ENCODE measurements at regions of chr1 and their contacts with region 1.

Region 1: GRCh38 chr1:55375617-55376258 is 160.6 kb upstream of the USP24 start:
- DNase-seq: peak in 5 of 10 donors; percentile 40 to 49 (median 43)
- H3K4me3 ChIP-seq: no peak overlapping the region
- H3K27ac ChIP-seq: peak overlapping the region in 18 of 59 donors; percentile 5 to 98 (median 92)
- H3K27me3 ChIP-seq: no peaks in the 10 kb centered on the region
- CTCF ChIP-seq: peak; percentile 84 to 97 (median 92)

Region 2: GRCh38 chr1:55284852-55285251 is 90.9 kb before region 1 on chr1:
- intact Hi-C with region 1: loop called (anchors 2 to 5 kb)
- DNase-seq: peak in 2 of 10 donors; percentile 23 to 30
- H3K4me3 ChIP-seq: peak overlapping the region in 1 of 59 donors; percentile 7
- H3K27ac ChIP-seq: peak overlapping the region in 1 of 59 donors; percentile 53
- H3K27me3 ChIP-seq: peaks cover 0 to 10% (median 0%) of the 10 kb centered on the region in 45 donors
- CTCF ChIP-seq: peak in 54 of 56 donors; percentile 48 to 91 (median 71)

Region 3: DNA sequence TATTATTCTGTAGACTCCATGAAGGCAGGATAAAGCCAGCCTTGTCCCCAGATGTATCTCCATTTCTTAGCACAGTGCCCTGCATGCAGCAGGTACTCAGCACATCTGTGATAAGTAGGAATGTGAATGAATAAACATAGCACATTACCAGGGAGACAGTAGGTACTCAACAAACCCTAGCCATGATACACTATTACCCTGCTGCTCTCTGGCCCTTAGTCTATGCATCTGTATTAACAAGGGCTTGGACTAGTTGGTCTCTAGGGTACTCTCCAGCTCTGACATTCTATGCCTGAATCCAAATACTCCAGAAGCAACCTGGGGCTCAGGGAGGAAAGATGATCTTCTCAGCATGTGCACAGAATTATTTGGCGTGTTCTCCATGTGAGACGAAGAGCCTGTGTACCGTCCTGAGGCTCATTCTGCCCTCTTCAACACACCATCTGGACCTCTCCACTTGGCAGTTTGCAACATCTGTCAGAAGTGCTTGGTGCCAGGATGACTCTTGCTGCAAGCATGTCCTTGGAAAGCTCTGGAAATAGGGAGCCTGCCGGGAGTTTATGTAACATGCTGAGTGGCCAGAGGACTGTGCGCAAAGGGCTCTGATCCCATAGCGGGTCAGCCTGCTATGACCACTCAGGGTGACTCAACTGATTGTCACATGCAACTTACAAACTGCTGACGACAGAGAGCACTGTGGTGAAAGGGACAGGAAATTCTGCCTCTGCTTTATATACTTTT is 67.6 kb after region 1 on chr1:
- intact Hi-C with region 1: no loop called
- DNase-seq: peak in 5 of 10 donors; percentile 10 to 35 (median 29)
- H3K4me3 ChIP-seq: no peak overlapping the region
- H3K27ac ChIP-seq: peak overlapping the region in 8 of 59 donors; percentile 27 to 54 (median 40)
- H3K27me3 ChIP-seq: no peaks in the 10 kb centered on the region
- CTCF ChIP-seq: peak in 1 of 56 donors; percentile 14

Region 4: DNA sequence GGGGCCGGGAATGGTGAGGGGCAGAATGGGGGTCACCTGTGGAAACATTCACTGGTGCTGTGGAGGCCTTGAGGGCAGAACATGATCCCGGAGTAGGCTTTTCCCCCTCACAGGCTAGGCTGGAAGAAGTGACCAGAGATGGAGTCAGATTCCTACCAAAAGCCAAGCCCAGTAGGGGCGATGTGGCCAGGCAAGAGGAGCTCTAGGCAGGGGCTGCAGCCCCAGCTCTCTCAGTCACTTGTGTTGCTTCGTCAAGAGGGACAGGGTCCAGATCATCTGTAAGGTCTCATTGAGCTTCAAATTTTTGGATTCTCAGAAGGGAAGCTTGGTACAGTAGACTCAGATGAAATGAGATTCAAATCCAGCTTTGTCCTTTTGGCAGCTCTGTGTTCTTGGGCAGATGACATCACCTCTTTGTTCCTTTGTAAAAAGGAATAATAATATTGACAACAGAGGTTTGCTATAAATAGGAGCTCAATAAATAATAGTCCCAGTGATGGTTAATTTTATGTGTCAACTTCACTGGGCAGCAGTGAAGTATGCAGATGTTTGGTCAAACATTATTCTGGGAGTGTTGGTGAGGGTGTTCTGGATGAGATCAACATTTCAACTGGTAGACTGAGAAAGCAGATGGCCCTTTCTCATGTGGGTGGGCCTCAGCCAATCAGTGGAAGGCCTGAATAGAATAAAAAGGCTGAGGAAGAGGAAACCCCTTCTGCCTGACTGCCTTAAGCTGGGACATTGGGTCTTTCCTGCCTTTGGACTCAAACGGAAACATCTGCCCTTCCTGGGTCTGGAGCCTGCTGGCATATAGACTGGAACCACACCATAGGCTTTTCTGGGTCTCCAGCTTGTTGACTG is 164.1 kb after region 1 on chr1:
- intact Hi-C with region 1: loop called in 1 of 2 experiments (anchors 2 kb)
- DNase-seq: peak in 2 of 10 donors; percentile 40 to 67
- H3K4me3 ChIP-seq: no peak overlapping the region
- H3K27ac ChIP-seq: peak overlapping the region in 46 of 59 donors; percentile 1 to 86 (median 55)
- H3K27me3 ChIP-seq: no peaks in the 10 kb centered on the region
- CTCF ChIP-seq: peak in 1 of 56 donors; percentile 21

Region 5: GRCh38 chr1:55640708-55641473 is 265.2 kb after region 1 on chr1:
- intact Hi-C with region 1: loop called in 1 of 2 experiments (anchors 10 kb)
- DNase-seq: peak in 9 of 10 donors; percentile 40 to 76 (median 59)
- H3K4me3 ChIP-seq: peak overlapping the region in 57 of 59 donors; percentile 3 to 62 (median 38)
- H3K27ac ChIP-seq: peak overlapping the region in 49 of 59 donors; percentile 18 to 85 (median 59)
- H3K27me3 ChIP-seq: no peaks in the 10 kb centered on the region
- CTCF ChIP-seq: peak in 5 of 56 donors; percentile 18 to 35 (median 20)

Region 6: DNA sequence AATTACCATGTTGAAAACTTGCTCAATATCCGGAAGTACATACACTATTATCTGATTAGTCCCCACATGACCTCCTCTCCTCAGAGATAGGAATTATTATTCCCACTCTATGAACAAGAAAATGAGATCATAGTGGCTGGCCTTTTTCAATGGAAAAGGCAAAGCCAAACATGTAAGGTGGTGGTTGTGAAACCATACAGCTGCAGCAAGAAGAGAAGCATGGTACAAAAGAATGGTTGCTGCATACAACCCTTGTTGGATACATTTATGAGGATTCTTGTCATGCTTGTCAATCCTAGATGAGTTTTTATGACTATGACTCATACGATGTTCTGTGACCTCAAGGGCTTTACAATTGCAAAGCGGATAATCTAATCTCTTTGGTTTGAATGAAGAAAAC is 689.0 kb after region 1 on chr1:
- intact Hi-C with region 1: loop called in 1 of 2 experiments (anchors 10 kb)
- DNase-seq: no peak
- H3K4me3 ChIP-seq: no peak overlapping the region
- H3K27ac ChIP-seq: no peak overlapping the region
- H3K27me3 ChIP-seq: no peaks in the 10 kb centered on the region
- CTCF ChIP-seq: no peak

Region 7: DNA sequence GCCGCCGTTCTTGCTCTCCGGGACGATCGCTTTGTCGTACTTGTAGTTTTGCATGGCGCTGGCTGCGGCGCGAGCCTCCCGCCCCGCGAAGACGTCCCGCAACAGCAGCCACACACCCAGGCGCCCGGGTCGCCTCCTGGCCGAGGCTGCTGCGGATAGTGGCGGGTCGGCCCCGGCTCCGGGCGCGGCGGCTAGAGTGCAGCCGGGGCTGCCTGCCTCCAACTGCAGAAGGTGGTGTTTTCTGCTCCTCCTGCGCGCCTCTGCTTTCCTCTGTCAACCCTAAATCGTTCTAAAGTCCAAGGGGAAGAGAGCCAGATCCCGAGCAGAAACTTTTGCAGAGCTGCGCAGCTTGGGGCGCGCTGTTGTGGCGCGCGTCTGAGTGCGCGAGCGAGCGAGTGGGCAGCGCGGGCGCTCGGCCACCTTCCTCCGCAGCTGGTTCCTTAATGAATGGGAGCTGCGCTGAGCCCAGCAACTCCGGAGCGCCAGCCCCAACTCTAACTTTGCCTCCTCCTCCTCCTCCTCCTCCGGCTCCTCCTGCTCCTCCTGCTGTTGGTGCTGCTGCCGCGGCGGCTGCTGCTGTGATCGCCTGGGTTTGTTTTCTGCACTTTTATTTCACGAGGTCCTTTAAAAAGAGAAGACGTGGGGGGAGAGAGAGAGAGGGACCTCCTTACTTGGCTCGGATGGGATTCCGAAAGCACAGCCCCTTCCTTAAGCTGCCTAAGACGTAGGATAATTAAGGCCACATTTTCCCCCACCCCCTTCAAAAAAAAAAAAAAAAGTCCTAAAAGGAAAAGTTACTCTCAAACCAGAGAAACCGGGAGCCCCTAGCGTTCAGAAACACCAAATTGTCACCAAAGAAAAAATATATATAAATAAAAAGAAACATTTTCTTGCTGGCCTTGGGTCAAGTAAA is 1203.5 kb after region 1 on chr1 and contains the start of gene PLPP3:
- intact Hi-C with region 1: loop called (anchors 5 kb)
- DNase-seq: peak; percentile 14 to 83 (median 78)
- H3K4me3 ChIP-seq: peak within 1 kb of the TSS; percentile 62 to 97 (median 86)
- H3K27ac ChIP-seq: peak within 1 kb of the TSS; percentile 45 to 98 (median 94)
- H3K27me3 ChIP-seq: peaks cover 0 to 10% (median 0%) of the 10 kb centered on the region in 45 donors
- CTCF ChIP-seq: peak; percentile 29 to 68 (median 54)
- total RNA-seq, gene PLPP3: 59.9 to 264 (median 115) TPM